Endothelial cell of umbilical vein (primary cell): ENCODE measurements at regions of chr15 and their contacts with region 1.

Region 1: GRCh38 chr15:41603941-41604911 is 45.2 kb downstream of the TYRO3 start:
- DNase-seq: peak; percentile 74
- H3K4me3 ChIP-seq: peak overlapping the region in 1 of 3 experiments; percentile 15
- H3K27ac ChIP-seq: no peak overlapping the region
- H3K4me1 ChIP-seq: peaks cover 7% of the 10 kb centered on the region
- H3K27me3 ChIP-seq: peaks cover 3 to 8% of the 10 kb centered on the region in 2 experiments
- CTCF ChIP-seq: peak; percentile 76 to 80
- POLR2A ChIP-seq: no peak

Region 2: DNA sequence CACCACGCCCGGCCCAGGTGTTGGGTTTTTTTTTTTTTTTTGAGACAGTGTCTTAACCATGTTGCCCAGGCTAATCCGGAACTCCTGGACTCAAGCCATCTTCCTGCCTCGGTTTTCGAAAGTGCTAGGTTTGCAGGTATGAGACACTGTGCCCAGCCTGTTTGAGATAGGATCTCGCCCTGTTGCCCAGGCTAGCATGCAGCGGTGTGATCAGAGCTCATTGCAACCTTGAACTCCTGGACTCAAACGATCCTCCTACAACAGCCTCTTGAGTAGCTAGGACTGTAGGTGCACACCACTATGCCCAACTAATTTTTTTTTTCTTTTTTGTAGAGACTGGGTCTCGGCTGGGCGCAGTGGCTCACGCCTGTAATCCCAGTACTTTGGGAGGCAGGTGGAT is 130.8 kb before region 1 on chr15:
- CTCF ChIA-PET with region 1: no interaction called
- POLR2A ChIA-PET with region 1: no interaction called
- dilution Hi-C with region 1: no loop called
- intact Hi-C with region 1: no loop called
- DNase-seq: no peak
- H3K4me3 ChIP-seq: no peak overlapping the region
- H3K27ac ChIP-seq: no peak overlapping the region
- H3K4me1 ChIP-seq: no peaks in the 10 kb centered on the region
- H3K27me3 ChIP-seq: no peaks in the 10 kb centered on the region
- CTCF ChIP-seq: no peak
- POLR2A ChIP-seq: no peak

Region 3: DNA sequence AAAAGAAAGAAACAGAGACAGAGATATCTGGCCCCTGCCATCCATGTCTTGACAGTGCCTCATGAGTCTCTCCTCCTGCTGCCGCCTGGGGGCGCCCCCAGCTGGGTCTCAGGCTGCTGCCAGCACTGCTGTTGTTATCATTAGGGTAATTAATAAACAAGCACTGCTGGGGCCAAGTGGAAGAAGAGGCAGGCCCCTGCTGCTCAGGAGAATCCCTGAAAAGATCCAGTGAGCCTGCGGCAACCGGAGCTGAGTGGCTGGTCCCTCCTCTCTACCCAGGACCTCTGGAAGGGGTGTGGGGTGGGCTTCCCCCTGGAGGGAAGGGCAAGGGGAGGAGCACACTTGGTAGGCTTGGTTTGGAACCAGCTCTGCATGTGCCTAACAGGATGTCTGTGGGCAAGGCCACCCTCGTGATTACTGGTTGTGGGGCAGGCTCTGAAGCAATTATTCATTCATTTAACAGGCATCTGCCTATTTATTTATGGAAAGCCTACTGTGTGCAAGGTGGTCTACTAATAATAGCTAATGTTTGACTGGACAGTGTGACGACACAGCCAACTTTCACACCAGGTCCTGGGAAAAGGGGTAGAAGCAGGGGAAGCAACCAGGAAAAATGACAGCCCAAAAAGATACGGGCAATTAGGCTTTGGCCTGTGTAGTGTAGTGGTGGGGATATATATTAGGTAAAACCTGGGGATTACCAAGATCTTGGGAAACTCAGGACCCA is 46.4 kb before region 1 on chr15:
- CTCF ChIA-PET with region 1: interaction called, 22 read pairs
- POLR2A ChIA-PET with region 1: no interaction called
- dilution Hi-C with region 1: no loop called
- intact Hi-C with region 1: no loop called
- DNase-seq: peak; percentile 82
- H3K4me3 ChIP-seq: peak overlapping the region in 1 of 3 experiments; percentile 35
- H3K27ac ChIP-seq: no peak overlapping the region
- H3K4me1 ChIP-seq: peaks cover 22% of the 10 kb centered on the region
- H3K27me3 ChIP-seq: no peaks in the 10 kb centered on the region
- CTCF ChIP-seq: peak; percentile 90 to 91
- POLR2A ChIP-seq: no peak

Region 4: DNA sequence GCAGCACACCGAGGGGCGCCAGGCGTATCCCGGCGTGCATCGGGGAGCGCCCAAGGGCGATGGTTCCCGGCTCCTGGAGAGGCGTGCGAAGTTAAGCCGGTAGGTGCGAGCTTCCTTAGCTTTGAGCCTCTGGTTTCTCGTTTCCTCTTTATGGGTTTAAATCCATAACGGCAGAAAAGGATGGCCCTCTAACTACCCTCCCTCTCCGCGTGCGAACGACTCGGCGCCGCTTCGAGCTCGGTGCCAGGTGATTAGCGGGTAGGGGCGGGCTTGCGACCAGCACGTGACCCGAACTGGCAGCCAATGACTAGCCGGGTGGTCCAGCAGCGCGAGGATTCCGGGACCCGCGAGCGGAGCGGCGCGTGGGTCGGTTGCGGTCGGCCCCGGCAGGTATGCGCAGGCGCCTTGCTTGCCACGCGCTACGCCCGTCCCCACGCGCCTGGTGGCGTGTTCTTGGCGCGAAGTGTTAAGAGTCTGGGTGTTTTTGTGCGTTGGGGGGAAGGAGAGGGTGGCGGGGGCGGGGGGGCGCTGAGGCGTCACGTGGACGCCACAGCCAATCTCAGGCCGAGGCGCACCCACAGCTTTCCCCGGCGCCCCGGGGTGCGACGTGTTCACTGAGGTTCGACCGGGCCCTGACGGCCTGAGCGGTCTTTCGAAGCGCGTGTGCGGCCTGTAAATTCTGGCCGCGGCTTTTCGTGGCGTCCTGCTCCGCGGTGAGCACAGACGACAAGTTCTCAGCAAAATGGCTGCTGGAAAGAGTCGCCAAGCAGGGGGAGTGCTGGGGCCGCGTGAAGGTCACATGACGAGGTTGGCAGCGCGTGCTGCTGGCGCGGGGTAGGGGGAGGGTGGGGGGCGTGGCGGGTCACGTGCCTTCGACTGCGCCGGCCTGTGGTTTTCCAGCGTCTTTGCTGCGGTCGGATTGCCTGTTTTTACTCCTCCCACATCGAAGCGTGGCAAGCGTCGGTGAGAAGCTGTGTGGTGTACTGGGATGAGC is 17.3 kb after region 1 on chr15:
- CTCF ChIA-PET with region 1: interaction called, 26 read pairs
- POLR2A ChIA-PET with region 1: no interaction called
- dilution Hi-C with region 1: no loop called
- intact Hi-C with region 1: no loop called
- DNase-seq: peak; percentile 80
- H3K4me3 ChIP-seq: peak overlapping the region; percentile 19 to 39 (median 28)
- H3K27ac ChIP-seq: no peak overlapping the region
- H3K4me1 ChIP-seq: peaks cover 4% of the 10 kb centered on the region
- H3K27me3 ChIP-seq: no peaks in the 10 kb centered on the region
- CTCF ChIP-seq: no peak
- POLR2A ChIP-seq: peak; percentile 22

Region 5: DNA sequence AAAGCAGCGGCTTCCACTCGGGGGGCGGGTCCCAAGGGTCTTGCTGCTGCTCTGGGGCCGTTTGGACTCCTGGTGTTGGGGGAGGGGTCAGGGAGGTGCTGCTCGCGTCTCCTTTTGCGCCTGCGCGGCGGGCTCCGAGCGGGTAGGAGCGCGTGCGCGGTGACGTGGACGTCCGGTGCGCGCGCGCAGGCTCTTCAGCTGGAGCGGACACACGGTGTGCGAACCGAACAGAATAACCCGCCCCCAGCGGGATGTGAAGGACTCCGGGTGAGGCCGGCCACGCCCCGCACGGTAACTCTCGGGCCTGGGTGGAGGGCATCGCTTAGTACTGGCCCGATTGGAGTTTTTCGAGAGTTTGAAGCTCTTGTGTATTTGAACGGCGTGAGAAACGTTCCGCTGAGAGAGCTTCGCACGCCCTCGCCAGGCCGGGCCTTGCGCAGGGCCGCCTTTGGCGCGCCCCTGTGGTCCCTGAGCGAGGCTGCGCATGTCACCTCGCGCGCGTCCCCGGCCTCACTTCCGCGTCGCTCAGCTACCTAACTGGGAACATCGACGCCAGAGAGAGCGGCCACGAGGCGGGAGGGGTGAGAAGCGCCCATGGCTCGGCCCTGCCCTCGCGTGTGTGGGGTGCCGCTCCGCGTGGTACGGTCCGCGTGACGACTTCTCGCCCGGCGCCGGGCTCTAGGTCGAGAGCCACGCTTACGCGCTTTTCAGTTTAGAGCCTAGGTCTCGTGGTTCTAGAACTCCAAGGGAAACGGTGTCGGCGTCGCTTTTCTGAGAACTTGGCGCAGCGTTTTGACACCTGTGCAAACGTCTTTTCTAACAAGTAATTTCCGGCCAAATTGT is 56.2 kb after region 1 on chr15 and contains the start of gene MGA:
- CTCF ChIA-PET with region 1: interaction called, 12 read pairs
- POLR2A ChIA-PET with region 1: no interaction called
- dilution Hi-C with region 1: no loop called
- intact Hi-C with region 1: no loop called
- DNase-seq: peak; percentile 93
- H3K4me3 ChIP-seq: peak within 1 kb of the TSS; percentile 8 to 42 (median 40)
- H3K27ac ChIP-seq: peak within 1 kb of the TSS; percentile 66
- H3K4me1 ChIP-seq: peaks cover 26% of the 10 kb centered on the region
- H3K27me3 ChIP-seq: peaks cover 2 to 14% of the 10 kb centered on the region in 2 experiments
- CTCF ChIP-seq: no peak
- POLR2A ChIP-seq: peak; percentile 59
- total RNA-seq, gene MGA: 34.0 and 36.5 TPM in 2 replicates

Region 6: GRCh38 chr15:41746802-41747201 is 142.6 kb after region 1 on chr15:
- CTCF ChIA-PET with region 1: interaction called, 14 read pairs
- POLR2A ChIA-PET with region 1: no interaction called
- dilution Hi-C with region 1: no loop called
- intact Hi-C with region 1: no loop called
- DNase-seq: peak; percentile 29
- H3K4me3 ChIP-seq: no peak overlapping the region
- H3K27ac ChIP-seq: no peak overlapping the region
- H3K4me1 ChIP-seq: peaks cover 10% of the 10 kb centered on the region
- H3K27me3 ChIP-seq: no peaks in the 10 kb centered on the region
- CTCF ChIP-seq: no peak
- POLR2A ChIP-seq: no peak

Region 7: GRCh38 chr15:41904541-41905005 is 300.3 kb after region 1 on chr15:
- CTCF ChIA-PET with region 1: interaction called, 10 read pairs
- POLR2A ChIA-PET with region 1: no interaction called
- dilution Hi-C with region 1: no loop called
- intact Hi-C with region 1: no loop called
- DNase-seq: peak; percentile 75
- H3K4me3 ChIP-seq: no peak overlapping the region
- H3K27ac ChIP-seq: no peak overlapping the region
- H3K4me1 ChIP-seq: no peaks in the 10 kb centered on the region
- H3K27me3 ChIP-seq: no peaks in the 10 kb centered on the region
- CTCF ChIP-seq: peak; percentile 85
- POLR2A ChIP-seq: no peak